Activated CD4-positive, alpha-beta memory T cell treated with anti-CD3 and anti-CD28 coated beads for 36 hours (primary cell): ENCODE measurements at regions of chr6 and their contacts with region 1.

Region 1: GRCh38 chr6:13355043-13355951 is 27.0 kb upstream of the TBC1D7 start:
- DNase-seq: peak; percentile 52
- H3K4me3 Mint-ChIP-seq: peak overlapping the region; percentile 56
- H3K27ac Mint-ChIP-seq: peak overlapping the region; percentile 97
- H3K4me1 Mint-ChIP-seq: peaks cover 45% of the 10 kb centered on the region
- H3K27me3 Mint-ChIP-seq: no peaks in the 10 kb centered on the region

Region 2: GRCh38 chr6:13272131-13273046 is 82.9 kb before region 1 on chr6:
- CTCF ChIA-PET with region 1: no interaction called
- POLR2A ChIA-PET with region 1: no interaction called
- intact Hi-C with region 1: loop called (anchors 1 kb)
- DNase-seq: no peak
- H3K4me3 Mint-ChIP-seq: no peak overlapping the region
- H3K27ac Mint-ChIP-seq: no peak overlapping the region
- H3K4me1 Mint-ChIP-seq: peaks cover 16% of the 10 kb centered on the region
- H3K27me3 Mint-ChIP-seq: no peaks in the 10 kb centered on the region

Region 3: GRCh38 chr6:13286181-13286580 is 69.1 kb before region 1 on chr6:
- CTCF ChIA-PET with region 1: no interaction called
- POLR2A ChIA-PET with region 1: no interaction called
- intact Hi-C with region 1: no loop called
- DNase-seq: no peak
- H3K4me3 Mint-ChIP-seq: no peak overlapping the region
- H3K27ac Mint-ChIP-seq: no peak overlapping the region
- H3K4me1 Mint-ChIP-seq: no peaks in the 10 kb centered on the region
- H3K27me3 Mint-ChIP-seq: no peaks in the 10 kb centered on the region

Region 4: DNA sequence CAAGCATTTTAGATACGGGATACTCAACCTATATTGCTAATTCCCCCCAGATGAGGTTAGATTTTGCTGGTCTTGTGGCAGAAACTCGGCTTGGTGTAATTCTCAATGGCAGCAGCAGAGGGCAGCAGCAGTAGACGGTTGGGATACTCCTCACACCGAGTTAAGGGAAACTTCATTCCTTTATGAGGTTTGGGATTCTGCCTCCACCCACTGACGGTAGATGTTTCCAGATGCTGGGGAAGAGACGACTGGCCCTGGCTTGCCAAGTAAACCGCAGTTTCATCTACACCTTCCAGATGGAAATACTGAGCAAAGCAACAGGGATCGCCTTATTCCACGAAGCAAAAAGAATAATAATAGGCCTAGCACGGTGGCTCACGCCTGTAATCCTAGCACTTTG is 18.7 kb before region 1 on chr6:
- CTCF ChIA-PET with region 1: interaction called, 5 read pairs
- POLR2A ChIA-PET with region 1: no interaction called
- intact Hi-C with region 1: loop called (anchors 2 kb)
- DNase-seq: peak; percentile 79
- H3K4me3 Mint-ChIP-seq: no peak overlapping the region
- H3K27ac Mint-ChIP-seq: no peak overlapping the region
- H3K4me1 Mint-ChIP-seq: peaks cover 6% of the 10 kb centered on the region
- H3K27me3 Mint-ChIP-seq: no peaks in the 10 kb centered on the region

Region 5: GRCh38 chr6:13427801-13428582 is 72.7 kb after region 1 on chr6:
- CTCF ChIA-PET with region 1: interaction called, 5 read pairs
- POLR2A ChIA-PET with region 1: interaction called, 3 read pairs
- intact Hi-C with region 1: loop called (anchors 1 kb)
- DNase-seq: peak; percentile 88
- H3K4me3 Mint-ChIP-seq: peak overlapping the region; percentile 53
- H3K27ac Mint-ChIP-seq: peak overlapping the region; percentile 86
- H3K4me1 Mint-ChIP-seq: peaks cover 66% of the 10 kb centered on the region
- H3K27me3 Mint-ChIP-seq: no peaks in the 10 kb centered on the region

Region 6: DNA sequence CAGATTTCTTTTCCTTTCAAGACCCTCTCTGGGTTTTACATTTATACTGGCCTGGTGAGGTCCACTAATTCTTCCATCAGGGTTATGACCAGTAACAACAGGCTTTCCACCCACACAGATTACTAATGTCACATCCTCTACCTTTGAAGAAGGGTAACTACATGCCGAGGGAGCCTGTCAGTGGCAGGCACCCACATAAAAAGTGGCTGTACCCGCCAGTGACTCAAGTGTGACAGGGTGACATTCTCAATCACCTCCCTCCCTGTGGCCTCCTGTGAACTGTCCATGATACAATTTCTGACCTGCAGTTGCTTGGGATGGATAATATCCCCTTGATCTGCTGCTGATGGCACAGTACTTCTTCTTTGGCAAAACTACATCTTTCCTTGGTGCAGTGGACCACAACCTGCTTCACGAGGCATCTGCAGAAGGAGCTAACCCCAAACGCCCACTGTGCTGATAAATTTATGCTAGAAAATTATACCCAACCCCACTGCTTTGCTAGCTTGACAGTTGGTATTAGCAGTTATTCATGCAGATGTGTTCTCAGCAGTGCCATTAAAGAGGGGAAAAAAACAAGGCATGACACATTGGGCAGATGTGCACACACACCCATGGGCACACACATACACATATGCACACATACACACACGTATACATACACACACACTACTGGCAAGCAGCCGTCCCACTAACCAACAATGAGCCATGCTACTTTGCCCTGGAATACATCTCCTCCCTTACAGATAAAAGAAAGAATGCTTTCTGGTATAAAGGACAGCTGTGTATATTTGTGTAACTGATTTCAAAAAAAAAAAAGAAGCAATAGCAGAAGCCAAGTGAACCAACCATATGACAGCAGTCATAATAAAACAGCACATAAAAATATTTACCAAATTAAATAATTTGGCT is 111.3 kb after region 1 on chr6:
- CTCF ChIA-PET with region 1: no interaction called
- POLR2A ChIA-PET with region 1: no interaction called
- intact Hi-C with region 1: loop called (anchors 1 kb)
- DNase-seq: peak; percentile 81
- H3K4me3 Mint-ChIP-seq: peak overlapping the region; percentile 42
- H3K27ac Mint-ChIP-seq: peak overlapping the region; percentile 86
- H3K4me1 Mint-ChIP-seq: peaks cover 34% of the 10 kb centered on the region
- H3K27me3 Mint-ChIP-seq: no peaks in the 10 kb centered on the region

Region 7: DNA sequence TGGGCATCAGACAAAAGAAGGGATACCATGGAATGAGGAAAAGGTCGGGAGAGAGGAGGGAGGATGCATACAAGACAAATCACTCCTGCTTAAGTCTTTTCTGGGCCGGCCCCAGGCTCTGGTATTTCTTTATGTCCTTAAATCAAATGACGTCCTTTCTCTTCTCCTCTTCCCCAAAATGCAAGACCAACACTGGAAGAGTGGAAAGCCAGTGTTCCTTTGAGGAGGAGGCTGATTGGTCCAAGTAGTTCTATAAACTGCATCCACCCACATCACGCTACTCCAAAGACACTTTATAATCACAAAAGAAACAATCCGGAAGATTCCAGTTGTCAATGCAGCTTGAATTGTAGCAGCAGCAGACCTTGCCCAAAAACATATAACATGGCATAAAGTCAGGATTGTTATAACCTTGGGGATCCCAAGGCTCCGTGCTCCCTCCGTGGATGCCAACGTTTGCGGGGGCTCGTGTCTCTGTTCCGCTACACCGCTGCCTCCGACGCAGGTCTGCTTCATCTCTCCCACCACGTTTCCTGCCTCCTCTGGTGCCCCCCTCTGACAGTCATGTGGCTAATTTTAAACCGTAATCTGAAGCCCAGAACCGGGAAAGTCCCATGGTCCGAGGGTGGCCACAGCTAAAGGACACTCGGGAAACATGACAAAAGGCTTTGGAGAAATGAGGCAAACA is 412.0 kb after region 1 on chr6:
- CTCF ChIA-PET with region 1: no interaction called
- POLR2A ChIA-PET with region 1: no interaction called
- intact Hi-C with region 1: loop called (anchors 10 kb)
- DNase-seq: peak; percentile 46
- H3K4me3 Mint-ChIP-seq: peak overlapping the region; percentile 52
- H3K27ac Mint-ChIP-seq: no peak overlapping the region
- H3K4me1 Mint-ChIP-seq: peaks cover 31% of the 10 kb centered on the region
- H3K27me3 Mint-ChIP-seq: no peaks in the 10 kb centered on the region